Activated CD8-positive, alpha-beta memory T cell treated with anti-CD3 and anti-CD28 coated beads, Interleukin-2, amount 10 ng/mL, durations not matched to agents 7 days and 5 days (primary cell): ENCODE measurements at regions of chrX and their contacts with region 1.

Region 1: DNA sequence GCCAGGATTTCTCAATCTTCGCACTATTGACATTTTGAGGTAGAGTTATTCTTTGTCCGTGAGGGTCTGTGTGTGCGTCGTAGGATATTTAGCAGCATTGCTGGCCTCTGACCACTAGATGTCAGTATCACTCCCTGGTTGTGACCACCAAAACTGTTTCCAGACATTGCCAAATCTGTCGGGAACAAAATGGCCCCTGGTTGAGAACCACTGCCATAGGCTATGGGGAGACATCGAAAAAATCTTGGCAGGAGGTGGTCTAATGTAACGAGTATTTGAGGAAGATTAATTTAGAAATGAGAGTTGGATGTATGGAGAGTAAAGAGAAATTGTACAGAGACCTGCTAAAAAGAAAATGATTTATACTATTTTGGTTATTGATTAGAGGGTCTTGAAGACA is 108.4 kb downstream of the DOCK11 start:
- DNase-seq: peak; percentile 45
- ATAC-seq: peak; percentile 27
- H3K4me3 Mint-ChIP-seq: no peak overlapping the region
- H3K27ac Mint-ChIP-seq: no peak overlapping the region
- H3K4me1 Mint-ChIP-seq: peaks cover 4% of the 10 kb centered on the region
- H3K27me3 Mint-ChIP-seq: no peaks in the 10 kb centered on the region

Region 2: DNA sequence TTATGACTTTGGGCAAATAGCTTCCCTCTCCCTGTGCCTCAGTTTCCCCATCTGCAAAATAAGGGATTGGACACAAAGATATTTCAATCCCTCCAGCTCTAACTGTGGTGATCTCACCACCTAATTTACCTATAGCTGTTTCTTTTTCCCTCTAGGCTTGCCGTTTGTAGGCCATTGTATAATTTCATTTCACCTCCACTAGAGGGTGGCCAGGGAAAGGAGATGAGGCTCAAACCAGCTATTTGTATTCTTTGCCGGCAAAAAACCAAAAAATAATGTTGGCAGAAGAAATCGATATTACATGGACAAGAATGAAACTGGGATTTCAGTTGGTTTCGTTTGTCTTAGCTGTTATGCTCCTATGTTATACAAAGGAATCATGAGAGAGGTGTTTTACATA is 144.5 kb before region 1 on chrX:
- CTCF ChIA-PET with region 1: interaction called, 24 read pairs
- DNase-seq: peak; percentile 39
- ATAC-seq: peak; percentile 69
- H3K4me3 Mint-ChIP-seq: no peak overlapping the region
- H3K27ac Mint-ChIP-seq: no peak overlapping the region
- H3K4me1 Mint-ChIP-seq: peaks cover 4% of the 10 kb centered on the region
- H3K27me3 Mint-ChIP-seq: no peaks in the 10 kb centered on the region

Region 3: GRCh38 chrX:118523920-118524319 is 80.1 kb before region 1 on chrX:
- CTCF ChIA-PET with region 1: no interaction called
- DNase-seq: peak; percentile 77
- ATAC-seq: peak; percentile 69
- H3K4me3 Mint-ChIP-seq: peak overlapping the region; percentile 64
- H3K27ac Mint-ChIP-seq: peak overlapping the region; percentile 97
- H3K4me1 Mint-ChIP-seq: peaks cover 72% of the 10 kb centered on the region
- H3K27me3 Mint-ChIP-seq: no peaks in the 10 kb centered on the region